ENCODE measurements at regions of chr4 and their contacts with region 1.

Region 1: DNA sequence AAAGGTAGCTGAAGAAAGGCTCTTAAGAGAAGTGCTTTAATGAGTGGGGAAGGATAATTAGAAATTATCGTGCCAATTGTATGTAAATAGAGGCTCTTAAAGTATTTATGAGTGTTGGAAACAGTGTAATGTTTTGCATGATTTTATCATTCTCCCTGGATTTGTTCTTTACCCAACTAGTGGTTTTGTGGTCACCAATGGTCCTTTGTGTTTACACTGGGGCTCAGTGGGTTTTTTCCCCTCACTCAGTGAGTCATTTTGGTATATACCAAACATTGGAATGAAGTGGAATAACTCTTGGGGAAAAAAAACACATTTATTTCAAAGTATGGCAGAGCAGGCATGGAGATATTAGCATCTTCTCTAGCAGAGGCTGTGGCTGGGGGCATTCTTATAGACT is 20.8 kb upstream of the LGI2 start:
- DNase-seq: no peak
- H3K4me3 ChIP-seq: no peak overlapping the region
- H3K27ac ChIP-seq: no peak overlapping the region
- H3K4me1 ChIP-seq: no peaks in the 10 kb centered on the region
- H3K27me3 ChIP-seq: no peaks in the 10 kb centered on the region
- CTCF ChIP-seq: no peak
- EP300 ChIP-seq: no peak
- POLR2A ChIP-seq: no peak

Region 2: DNA sequence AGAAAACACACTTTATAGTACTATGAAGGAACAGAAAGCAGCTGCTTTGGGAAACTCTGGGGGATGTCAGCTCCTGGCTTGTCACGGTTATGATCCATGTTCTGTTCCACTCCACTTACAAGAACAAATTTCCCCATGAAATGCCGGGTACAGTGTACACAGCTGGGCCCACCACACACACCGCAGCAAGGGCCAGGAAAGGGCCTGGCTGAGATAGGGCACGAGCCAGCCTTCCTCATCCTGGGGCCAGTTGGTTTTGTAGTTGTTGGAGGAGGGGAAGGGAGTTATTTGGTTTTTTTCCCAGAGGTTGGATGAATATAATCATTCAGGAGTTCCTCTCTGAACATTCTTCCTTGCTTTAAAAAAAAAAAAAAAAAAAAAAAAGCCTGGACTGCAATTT is 51.9 kb after region 1 on chr4:
- intact Hi-C with region 1: loop called in 1 of 4 experiments (anchors 2 kb)
- DNase-seq: peak; percentile 43 to 74 (median 59)
- H3K4me3 ChIP-seq: no peak overlapping the region
- H3K27ac ChIP-seq: peak overlapping the region; percentile 4 to 59
- H3K4me1 ChIP-seq: peaks cover 11% of the 10 kb centered on the region
- H3K27me3 ChIP-seq: no peaks in the 10 kb centered on the region
- CTCF ChIP-seq: no peak
- EP300 ChIP-seq: no peak
- POLR2A ChIP-seq: no peak

Region 3: DNA sequence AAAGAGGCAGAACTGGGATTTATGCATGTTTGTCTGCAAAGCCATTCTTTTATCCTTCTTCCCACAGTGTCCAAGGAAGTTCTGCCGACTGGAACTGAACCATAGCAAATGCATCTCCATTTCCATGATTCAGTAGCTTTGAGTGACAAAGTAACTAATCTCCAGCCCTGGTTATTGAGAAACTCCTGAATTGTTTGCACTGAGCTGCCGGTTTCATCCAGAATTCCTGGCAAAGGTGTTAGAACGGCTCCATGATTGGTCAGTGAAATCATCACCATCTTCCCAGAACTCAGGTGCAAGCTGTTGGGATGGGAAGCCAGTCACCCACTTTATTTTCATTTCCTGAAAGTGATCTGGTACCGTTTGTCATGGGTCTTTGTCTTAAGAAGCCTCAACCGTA is 557.1 kb after region 1 on chr4:
- intact Hi-C with region 1: no loop called
- DNase-seq: no peak
- H3K4me3 ChIP-seq: no peak overlapping the region
- H3K27ac ChIP-seq: no peak overlapping the region
- H3K4me1 ChIP-seq: no peaks in the 10 kb centered on the region
- H3K27me3 ChIP-seq: no peaks in the 10 kb centered on the region
- CTCF ChIP-seq: no peak
- EP300 ChIP-seq: no peak
- POLR2A ChIP-seq: no peak